ENCODE measurements at regions of chr12 and their contacts with region 1.

Region 1: DNA sequence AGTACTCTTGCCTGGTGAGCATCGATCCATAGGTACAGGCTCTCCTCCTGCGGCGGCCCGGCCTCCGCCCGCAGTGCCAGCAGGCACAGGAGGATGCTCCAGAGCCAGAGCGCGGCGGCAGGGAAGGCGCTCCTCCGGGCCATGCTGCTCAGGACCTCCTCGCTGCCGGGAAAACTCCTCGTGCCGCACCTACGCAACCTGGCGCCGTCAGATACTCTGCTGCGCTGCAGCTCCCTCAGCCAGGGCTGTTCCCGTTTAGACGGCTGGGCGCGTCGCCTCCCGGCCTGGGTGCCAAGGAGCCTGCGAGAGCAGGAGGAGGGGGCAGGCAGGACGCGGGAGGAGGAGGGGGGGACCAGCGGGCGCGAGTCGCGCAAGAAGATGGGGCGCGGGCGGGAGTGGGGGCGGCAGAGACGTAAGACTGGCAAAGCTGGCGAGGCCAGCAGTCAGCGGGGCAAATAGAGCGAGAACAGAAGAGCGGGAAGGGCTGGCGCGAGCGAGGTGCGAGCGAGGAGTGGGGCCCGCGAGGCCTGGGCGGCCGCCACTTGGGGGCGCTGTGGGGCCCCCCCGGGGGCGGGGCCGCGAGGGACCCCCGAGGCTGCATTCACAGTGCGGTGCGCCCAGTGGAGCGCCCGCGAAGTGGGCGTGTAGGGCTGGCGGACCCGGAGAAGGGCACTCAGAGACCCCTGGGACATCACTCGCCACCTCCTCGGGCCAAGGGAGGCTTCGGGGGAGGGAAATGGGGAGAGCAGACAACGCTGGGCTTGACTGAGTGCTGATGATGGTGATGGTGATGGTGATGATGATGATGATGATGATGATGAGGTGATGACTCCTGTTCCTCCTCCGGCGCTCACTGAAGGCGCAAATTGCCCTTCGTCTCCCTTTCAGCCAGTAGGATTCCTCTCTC is at the start of gene WIF1:
- DNase-seq: no peak
- H3K4me3 ChIP-seq: no peak within 1 kb of the TSS
- H3K27ac ChIP-seq: no peak within 1 kb of the TSS
- H3K4me1 ChIP-seq: no peaks in the 10 kb centered on the region
- CTCF ChIP-seq: peak; percentile 64
- total RNA-seq, gene WIF1: not detected in 2 replicates

Region 2: GRCh38 chr12:65232476-65233077 is 111.3 kb after region 1 on chr12:
- CTCF ChIA-PET with region 1: no interaction called
- POLR2A ChIA-PET with region 1: interaction called, 3 read pairs
- intact Hi-C with region 1: loop called (anchors 5 kb)
- DNase-seq: peak; percentile 52
- H3K4me3 ChIP-seq: no peak overlapping the region
- H3K27ac ChIP-seq: no peak overlapping the region
- H3K4me1 ChIP-seq: no peaks in the 10 kb centered on the region
- CTCF ChIP-seq: peak; percentile 85

Measured in OCI-LY7 (cell line).